Activated CD4-positive, alpha-beta memory T cell treated with anti-CD3 and anti-CD28 coated beads, Interleukin-2, amount 10 ng/mL, durations not matched to agents 7 days and 5 days (primary cell): ENCODE measurements at regions of chr9 and their contacts with region 1.

Region 1: DNA sequence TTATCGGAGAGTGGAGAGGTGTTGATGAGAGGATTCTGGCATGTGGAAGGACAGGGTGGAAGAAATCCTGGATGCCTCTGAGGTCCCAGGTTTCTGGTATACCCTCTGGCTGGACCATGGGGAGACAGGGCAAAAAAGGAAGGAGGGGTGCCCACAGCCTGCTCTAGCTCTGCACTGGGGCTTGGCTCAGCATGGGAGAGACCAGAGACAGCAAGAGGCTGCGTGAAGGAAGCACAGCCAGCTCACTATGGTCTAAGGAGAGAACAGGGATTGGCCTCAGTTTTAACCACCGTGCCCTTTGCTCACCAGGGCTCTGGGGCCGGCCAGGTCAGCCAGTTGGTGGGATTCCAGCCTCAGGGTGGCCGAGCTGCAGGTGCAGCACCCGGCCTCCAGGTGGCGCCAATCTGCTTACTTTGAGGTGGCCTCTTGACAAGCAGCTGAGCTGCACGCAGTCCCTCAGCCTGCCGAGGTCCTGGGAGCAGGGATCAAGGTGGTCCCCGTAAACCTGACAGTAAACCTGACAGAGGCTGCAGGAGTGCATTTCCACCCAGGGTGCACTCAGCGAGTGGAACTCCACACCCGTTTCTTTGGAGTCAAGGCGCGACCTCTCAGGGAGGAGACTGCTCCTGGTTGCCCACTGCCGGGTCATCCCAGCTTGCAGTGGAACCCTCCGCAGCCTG is 25.0 kb upstream of the SPTLC1 start:
- DNase-seq: peak; percentile 73
- H3K4me3 Mint-ChIP-seq: no peak overlapping the region
- H3K27ac Mint-ChIP-seq: no peak overlapping the region
- H3K4me1 Mint-ChIP-seq: peaks cover 9% of the 10 kb centered on the region
- H3K27me3 Mint-ChIP-seq: peaks cover 33% of the 10 kb centered on the region

Region 2: DNA sequence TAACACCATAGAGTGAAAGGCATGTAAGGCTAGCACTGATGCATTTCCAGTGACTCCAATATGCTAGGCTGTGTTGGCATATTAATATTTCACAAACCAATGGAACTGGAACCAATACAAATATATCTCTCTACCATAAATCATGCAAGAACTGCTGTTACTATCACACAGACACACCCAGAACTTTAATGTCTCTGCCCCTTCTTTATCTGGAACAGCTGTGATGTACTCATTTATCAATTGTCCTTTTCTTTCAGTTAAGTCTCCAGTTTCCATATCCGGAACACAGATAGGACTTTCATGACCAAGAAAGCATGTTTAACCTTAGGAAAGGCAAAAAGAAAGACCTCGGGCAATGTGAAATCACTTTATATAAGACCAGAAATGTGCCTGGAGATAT is 95.3 kb before region 1 on chr9:
- CTCF ChIA-PET with region 1: no interaction called
- POLR2A ChIA-PET with region 1: no interaction called
- DNase-seq: no peak
- H3K4me3 Mint-ChIP-seq: no peak overlapping the region
- H3K27ac Mint-ChIP-seq: no peak overlapping the region
- H3K4me1 Mint-ChIP-seq: no peaks in the 10 kb centered on the region
- H3K27me3 Mint-ChIP-seq: no peaks in the 10 kb centered on the region

Region 3: DNA sequence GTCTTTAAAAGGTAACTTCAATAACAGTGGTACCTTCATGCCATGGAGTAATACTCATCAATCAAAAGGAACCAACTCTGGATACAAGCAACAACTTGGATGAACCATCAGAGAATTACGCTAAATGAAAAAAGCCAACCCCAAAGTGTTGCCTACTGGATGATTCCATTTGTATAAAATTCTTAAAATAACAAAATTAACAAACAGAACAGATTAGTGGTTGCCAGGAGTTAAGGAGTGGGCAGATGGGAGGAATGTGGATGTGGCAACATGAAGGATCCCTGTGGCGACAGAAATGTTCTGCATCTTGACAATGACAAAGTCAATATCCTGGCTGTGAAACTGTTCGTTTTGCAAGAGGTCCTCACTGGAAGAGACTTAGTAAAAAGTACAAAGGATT is 75.5 kb before region 1 on chr9:
- CTCF ChIA-PET with region 1: no interaction called
- POLR2A ChIA-PET with region 1: no interaction called
- DNase-seq: no peak
- H3K4me3 Mint-ChIP-seq: no peak overlapping the region
- H3K27ac Mint-ChIP-seq: no peak overlapping the region
- H3K4me1 Mint-ChIP-seq: peaks cover 2% of the 10 kb centered on the region
- H3K27me3 Mint-ChIP-seq: no peaks in the 10 kb centered on the region

Region 4: DNA sequence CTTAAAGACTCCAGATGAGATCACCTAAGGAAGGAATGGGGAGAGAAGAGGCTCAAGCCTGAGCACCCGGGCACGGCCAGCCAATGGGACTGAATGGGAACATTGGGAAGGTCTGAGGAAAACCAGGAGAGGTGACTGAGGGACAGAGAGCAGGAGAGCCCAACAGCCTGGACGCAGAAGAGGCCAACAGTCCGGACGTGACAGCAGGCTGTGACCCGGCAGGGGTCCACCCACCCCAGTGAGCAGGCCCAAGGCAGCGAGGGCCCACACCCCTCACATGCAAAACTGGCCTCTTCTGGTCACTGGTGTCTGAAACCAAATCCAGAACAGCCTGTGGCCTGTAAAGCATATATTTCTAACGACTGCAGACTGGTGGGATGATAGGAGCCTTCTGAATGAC is 17.4 kb before region 1 on chr9:
- CTCF ChIA-PET with region 1: interaction called, 35 read pairs
- POLR2A ChIA-PET with region 1: no interaction called
- DNase-seq: no peak
- H3K4me3 Mint-ChIP-seq: no peak overlapping the region
- H3K27ac Mint-ChIP-seq: no peak overlapping the region
- H3K4me1 Mint-ChIP-seq: no peaks in the 10 kb centered on the region
- H3K27me3 Mint-ChIP-seq: peaks cover 13% of the 10 kb centered on the region

Region 5: GRCh38 chr9:92242260-92243136 is 102.3 kb after region 1 on chr9:
- CTCF ChIA-PET with region 1: interaction called, 30 read pairs
- POLR2A ChIA-PET with region 1: no interaction called
- DNase-seq: no peak
- H3K4me3 Mint-ChIP-seq: no peak overlapping the region
- H3K27ac Mint-ChIP-seq: no peak overlapping the region
- H3K4me1 Mint-ChIP-seq: no peaks in the 10 kb centered on the region
- H3K27me3 Mint-ChIP-seq: no peaks in the 10 kb centered on the region

Region 6: GRCh38 chr9:92349771-92350739 is 209.8 kb after region 1 on chr9:
- CTCF ChIA-PET with region 1: no interaction called
- POLR2A ChIA-PET with region 1: no interaction called
- DNase-seq: no peak
- H3K4me3 Mint-ChIP-seq: no peak overlapping the region
- H3K27ac Mint-ChIP-seq: no peak overlapping the region
- H3K4me1 Mint-ChIP-seq: peaks cover 7% of the 10 kb centered on the region
- H3K27me3 Mint-ChIP-seq: no peaks in the 10 kb centered on the region

Region 7: DNA sequence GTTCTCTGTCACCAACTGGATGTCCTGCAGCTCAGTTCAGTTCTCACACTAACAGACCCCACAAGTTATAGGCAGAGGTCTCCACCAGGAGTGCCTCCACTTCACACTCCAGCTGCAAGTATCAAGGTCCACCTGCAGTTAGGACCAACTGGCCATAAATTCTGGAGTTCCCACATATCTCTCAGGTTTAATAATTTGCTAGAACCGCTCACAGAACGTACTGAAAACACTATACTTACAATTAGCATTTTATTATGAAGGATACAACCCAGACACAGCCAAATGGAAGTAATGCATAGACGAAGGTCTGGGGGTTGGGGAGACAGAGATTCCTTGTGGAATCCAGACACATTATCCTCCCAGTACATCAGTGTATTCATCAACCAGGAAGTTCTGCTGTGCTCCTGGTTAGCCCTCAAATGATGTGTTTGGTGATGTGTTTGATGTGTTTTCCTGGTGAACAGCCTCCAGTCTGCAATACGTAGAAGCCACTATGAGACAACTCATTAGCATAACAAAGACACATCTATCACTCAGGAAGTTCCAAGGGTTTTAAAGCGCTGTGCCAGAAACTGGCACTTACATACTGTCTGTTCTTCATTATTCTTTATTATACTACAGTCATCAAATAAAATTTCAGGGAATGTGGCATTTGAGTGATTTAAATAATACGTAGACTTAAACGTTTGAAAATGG is 238.8 kb after region 1 on chr9:
- CTCF ChIA-PET with region 1: no interaction called
- POLR2A ChIA-PET with region 1: no interaction called
- DNase-seq: no peak
- H3K4me3 Mint-ChIP-seq: no peak overlapping the region
- H3K27ac Mint-ChIP-seq: no peak overlapping the region
- H3K4me1 Mint-ChIP-seq: peaks cover 11% of the 10 kb centered on the region
- H3K27me3 Mint-ChIP-seq: no peaks in the 10 kb centered on the region

Region 8: DNA sequence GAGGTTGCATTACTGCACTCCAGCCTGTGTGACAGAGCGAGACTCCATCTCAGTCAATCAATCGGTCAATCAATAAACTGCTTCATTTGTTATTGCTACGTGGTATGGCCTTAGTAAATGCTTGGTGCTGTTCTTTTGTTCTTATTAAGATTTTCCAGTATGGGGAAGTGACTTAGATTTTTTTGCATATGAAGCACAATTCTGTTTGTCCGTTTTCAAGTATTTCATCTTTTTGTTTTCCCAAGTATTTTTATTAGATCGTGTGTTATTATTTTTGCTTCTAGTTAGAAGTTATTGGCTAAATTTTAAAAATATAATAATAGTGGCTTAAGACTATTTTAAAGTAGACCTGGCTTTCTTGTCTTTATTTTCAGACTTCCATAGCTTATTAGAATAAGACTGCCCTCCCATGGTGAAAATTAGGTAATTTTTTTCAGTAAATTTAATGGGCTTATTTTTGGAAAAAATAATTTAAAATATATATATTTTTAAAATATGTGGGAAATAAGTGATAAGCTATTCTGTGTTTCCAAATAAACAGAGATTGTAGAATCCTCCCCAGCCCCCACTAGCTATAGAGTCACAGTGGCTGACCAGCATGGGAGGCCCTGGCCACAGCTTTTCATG is 298.8 kb after region 1 on chr9:
- CTCF ChIA-PET with region 1: interaction called, 13 read pairs
- POLR2A ChIA-PET with region 1: no interaction called
- DNase-seq: no peak
- H3K4me3 Mint-ChIP-seq: no peak overlapping the region
- H3K27ac Mint-ChIP-seq: no peak overlapping the region
- H3K4me1 Mint-ChIP-seq: peaks cover 18% of the 10 kb centered on the region
- H3K27me3 Mint-ChIP-seq: no peaks in the 10 kb centered on the region

Region 9: GRCh38 chr9:92790542-92791527 is 650.6 kb after region 1 on chr9:
- CTCF ChIA-PET with region 1: interaction called, 26 read pairs
- POLR2A ChIA-PET with region 1: no interaction called
- DNase-seq: peak; percentile 79
- H3K4me3 Mint-ChIP-seq: no peak overlapping the region
- H3K27ac Mint-ChIP-seq: no peak overlapping the region
- H3K4me1 Mint-ChIP-seq: peaks cover 12% of the 10 kb centered on the region
- H3K27me3 Mint-ChIP-seq: peaks cover 16% of the 10 kb centered on the region